Calu3 (cell line): ENCODE measurements at regions of chr22 and their contacts with region 1.

Region 1: DNA sequence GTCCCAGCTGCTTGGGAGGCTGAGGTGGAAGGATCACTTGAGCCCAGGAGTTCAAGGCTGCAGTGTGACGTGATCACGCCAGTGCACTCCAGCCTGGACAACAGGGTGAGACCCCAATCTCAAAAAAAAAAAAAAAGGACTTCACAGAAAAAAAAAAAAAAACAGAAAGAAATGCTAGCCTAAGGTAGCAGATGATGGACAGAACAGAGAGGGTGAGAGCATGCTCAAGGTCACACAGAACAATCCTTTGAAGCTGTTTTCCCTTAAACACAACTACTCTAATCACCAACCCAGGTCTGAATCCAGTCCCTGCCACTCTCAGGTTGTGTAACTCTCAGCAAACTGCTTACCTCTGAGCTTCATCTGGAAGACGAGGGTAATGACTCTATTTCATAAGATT is 9.7 kb downstream of the ZMAT5 start:
- DNase-seq: no peak
- H3K4me3 Mint-ChIP-seq: no peak overlapping the region
- H3K27ac Mint-ChIP-seq: no peak overlapping the region
- H3K4me1 Mint-ChIP-seq: no peaks in the 10 kb centered on the region
- H3K27me3 Mint-ChIP-seq: no peaks in the 10 kb centered on the region
- CTCF ChIP-seq: no peak

Region 2: DNA sequence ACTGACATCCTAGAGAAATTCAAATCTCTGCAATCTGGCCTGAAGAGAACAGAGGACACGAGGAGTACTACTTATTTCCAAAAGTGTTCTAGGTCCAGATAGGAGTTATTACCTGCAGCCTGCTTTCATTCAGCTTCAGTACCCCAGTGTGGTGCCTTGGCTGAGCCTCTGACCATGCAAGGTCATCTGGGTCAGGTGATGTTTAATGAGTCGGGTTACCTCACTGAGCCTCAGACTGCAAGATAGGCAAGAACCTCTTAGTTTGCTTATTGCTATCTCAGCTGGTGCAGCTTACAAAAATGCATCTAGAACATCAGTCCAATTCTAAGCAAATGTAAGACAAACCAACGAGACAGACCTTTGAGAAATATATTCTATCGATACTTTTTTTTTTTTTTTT is 163.2 kb before region 1 on chr22:
- CTCF ChIA-PET with region 1: no interaction called
- intact Hi-C with region 1: no loop called
- DNase-seq: no peak
- H3K4me3 Mint-ChIP-seq: no peak overlapping the region
- H3K27ac Mint-ChIP-seq: no peak overlapping the region
- H3K4me1 Mint-ChIP-seq: no peaks in the 10 kb centered on the region
- H3K27me3 Mint-ChIP-seq: no peaks in the 10 kb centered on the region
- CTCF ChIP-seq: no peak

Region 3: GRCh38 chr22:29710922-29711593 is 46.0 kb before region 1 on chr22:
- CTCF ChIA-PET with region 1: interaction called, 12 read pairs
- intact Hi-C with region 1: no loop called
- DNase-seq: peak; percentile 43
- H3K4me3 Mint-ChIP-seq: no peak overlapping the region
- H3K27ac Mint-ChIP-seq: no peak overlapping the region
- H3K4me1 Mint-ChIP-seq: peaks cover 14% of the 10 kb centered on the region
- H3K27me3 Mint-ChIP-seq: peaks cover 97% of the 10 kb centered on the region
- CTCF ChIP-seq: no peak

Region 4: GRCh38 chr22:30127749-30128166 is 370.7 kb after region 1 on chr22:
- CTCF ChIA-PET with region 1: no interaction called
- intact Hi-C with region 1: no loop called
- DNase-seq: no peak
- H3K4me3 Mint-ChIP-seq: no peak overlapping the region
- H3K27ac Mint-ChIP-seq: no peak overlapping the region
- H3K4me1 Mint-ChIP-seq: peaks cover 7% of the 10 kb centered on the region
- H3K27me3 Mint-ChIP-seq: no peaks in the 10 kb centered on the region
- CTCF ChIP-seq: no peak